OCI-LY7 (cell line): ENCODE measurements at regions of chr1 and their contacts with region 1.

Region 1: DNA sequence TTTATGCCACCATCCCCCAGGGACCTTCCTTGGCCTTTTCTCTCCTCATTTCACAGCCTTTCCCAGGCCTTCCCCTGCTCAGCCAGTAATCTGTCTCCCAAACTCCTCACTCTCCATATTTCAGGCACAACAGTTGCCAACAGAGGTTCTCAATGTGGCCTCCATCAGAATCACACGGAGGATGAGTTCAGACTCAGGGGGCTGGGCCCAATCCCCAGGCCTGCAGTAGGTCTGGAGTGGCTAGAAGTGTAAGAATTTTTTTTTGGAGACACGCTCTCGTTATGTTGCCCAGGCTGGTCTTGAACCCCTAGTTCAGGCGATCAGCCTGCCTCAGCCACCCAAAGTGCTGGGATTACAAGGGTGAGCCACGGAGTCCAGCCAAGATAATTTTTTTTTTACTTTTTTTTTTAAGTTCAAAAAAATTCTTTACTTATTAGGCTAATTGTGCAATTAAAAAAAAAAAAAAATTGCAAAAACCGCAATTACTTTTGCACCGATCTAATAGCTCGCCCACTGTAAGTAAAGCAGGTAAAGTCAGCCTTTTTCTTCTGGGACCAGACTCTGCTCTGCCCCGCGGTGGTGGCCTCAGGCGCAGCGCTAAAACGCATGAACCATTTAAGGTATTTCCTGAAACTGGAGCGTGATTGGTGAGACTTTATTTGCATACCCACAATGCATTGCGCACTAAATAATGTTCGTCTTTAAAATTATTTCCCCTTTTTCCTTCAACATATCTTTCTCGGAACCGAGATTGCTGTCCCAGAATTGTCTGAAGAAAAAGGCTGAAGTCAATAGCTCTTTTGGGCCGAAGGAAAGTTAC is 18.7 kb downstream of the KIAA2013 start:
- DNase-seq: peak; percentile 96
- H3K4me3 ChIP-seq: no peak overlapping the region
- H3K27ac ChIP-seq: peak overlapping the region; percentile 98
- H3K4me1 ChIP-seq: peaks cover 10% of the 10 kb centered on the region
- CTCF ChIP-seq: peak; percentile 97

Region 2: DNA sequence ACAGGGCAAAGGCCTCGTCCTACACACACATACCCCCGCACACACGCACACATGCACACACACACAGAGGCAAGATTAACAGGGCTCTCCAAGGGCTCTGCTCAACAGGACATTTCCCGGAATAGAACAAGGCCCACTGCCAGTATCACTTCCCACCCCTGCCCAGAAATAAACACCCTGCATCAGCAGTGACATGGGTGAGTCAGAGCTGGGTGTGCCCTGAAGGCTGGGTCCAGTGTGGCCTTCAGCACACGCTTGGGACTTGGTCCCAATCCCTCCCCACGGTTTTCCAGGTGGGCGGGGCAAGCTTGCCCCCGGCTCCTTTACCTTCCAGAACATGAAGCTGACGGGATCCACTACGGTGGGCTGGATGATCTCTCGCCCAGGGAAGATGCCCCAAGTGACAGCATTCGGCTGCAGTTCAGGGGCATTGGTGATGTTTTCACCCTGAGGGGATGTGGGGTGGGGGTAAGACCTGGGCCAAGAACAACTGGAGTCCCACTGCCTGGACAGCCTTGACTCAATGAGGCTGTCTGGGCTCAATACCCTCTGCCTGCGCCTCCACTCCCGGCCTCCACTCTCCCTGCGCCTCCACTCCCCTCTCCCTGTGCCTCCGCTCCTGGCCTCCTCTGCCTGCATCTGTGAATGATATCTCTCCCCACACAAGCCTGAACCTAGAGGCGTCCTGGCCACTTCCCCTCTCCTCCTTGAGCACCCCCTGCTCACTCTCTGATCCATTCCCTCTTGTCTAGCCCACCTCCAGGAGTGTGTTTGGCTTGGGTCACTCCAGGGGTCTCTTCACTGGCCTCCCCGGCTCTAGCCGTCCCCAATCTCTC is 116.4 kb before region 1 on chr1:
- CTCF ChIA-PET with region 1: no interaction called
- POLR2A ChIA-PET with region 1: no interaction called
- intact Hi-C with region 1: no loop called
- DNase-seq: no peak
- H3K4me3 ChIP-seq: no peak overlapping the region
- H3K27ac ChIP-seq: no peak overlapping the region
- H3K4me1 ChIP-seq: peaks cover 6% of the 10 kb centered on the region
- CTCF ChIP-seq: no peak

Region 3: DNA sequence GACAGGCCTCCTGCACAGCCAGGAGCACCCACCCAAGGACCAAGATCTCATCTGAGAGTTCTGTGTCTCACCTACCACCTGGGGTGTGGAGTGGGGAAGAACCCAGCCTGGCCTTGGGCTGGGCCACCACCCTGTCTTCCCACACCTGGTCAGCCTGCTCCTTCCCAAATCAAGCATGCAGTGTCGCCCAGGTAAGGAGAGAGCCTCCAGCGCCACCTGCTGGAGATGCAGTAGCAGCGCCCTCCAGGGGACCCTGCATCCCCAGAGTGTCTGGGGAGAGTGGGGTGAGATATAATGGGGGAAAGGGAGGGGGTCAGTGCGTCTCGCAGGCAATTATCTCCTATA is 13.6 kb before region 1 on chr1:
- CTCF ChIA-PET with region 1: no interaction called
- POLR2A ChIA-PET with region 1: interaction called, 10 read pairs
- intact Hi-C with region 1: no loop called
- DNase-seq: peak; percentile 76
- H3K4me3 ChIP-seq: no peak overlapping the region
- H3K27ac ChIP-seq: no peak overlapping the region
- H3K4me1 ChIP-seq: no peaks in the 10 kb centered on the region
- CTCF ChIP-seq: peak; percentile 96

Region 4: DNA sequence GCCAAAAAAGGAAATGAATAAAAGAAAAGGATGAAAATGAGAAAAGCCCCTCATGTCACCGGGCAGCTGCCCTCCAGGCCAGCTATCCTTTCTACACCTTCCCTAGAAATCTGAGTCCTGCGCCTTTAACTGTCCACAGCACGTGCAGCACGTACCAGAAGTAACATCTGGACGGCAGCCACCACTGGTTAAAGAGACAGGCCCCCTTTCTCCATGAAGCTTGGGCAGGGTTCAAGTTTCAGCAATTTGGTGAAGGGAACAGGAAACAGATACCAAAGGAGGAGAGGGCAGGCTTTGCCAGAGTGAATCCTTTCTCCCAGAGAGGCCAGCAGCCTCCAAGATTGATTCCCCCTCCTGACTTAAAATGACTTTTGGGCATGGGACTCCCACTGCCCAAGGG is 22.4 kb after region 1 on chr1:
- CTCF ChIA-PET with region 1: no interaction called
- POLR2A ChIA-PET with region 1: interaction called, 17 read pairs
- intact Hi-C with region 1: loop called (anchors 1 kb)
- DNase-seq: peak; percentile 76
- H3K4me3 ChIP-seq: no peak overlapping the region
- H3K27ac ChIP-seq: no peak overlapping the region
- H3K4me1 ChIP-seq: peaks cover 44% of the 10 kb centered on the region
- CTCF ChIP-seq: no peak

Region 5: GRCh38 chr1:11979851-11980675 is 72.6 kb after region 1 on chr1 and contains the start of gene MFN2:
- CTCF ChIA-PET with region 1: no interaction called
- POLR2A ChIA-PET with region 1: interaction called, 9 read pairs
- intact Hi-C with region 1: loop called (anchors 1 kb)
- DNase-seq: peak; percentile 93
- H3K4me3 ChIP-seq: peak within 1 kb of the TSS; percentile 93
- H3K27ac ChIP-seq: peak within 1 kb of the TSS; percentile 60
- H3K4me1 ChIP-seq: peaks cover 21% of the 10 kb centered on the region
- CTCF ChIP-seq: no peak
- total RNA-seq, gene MFN2: 28.3 and 32.2 TPM in 2 replicates

Region 6: DNA sequence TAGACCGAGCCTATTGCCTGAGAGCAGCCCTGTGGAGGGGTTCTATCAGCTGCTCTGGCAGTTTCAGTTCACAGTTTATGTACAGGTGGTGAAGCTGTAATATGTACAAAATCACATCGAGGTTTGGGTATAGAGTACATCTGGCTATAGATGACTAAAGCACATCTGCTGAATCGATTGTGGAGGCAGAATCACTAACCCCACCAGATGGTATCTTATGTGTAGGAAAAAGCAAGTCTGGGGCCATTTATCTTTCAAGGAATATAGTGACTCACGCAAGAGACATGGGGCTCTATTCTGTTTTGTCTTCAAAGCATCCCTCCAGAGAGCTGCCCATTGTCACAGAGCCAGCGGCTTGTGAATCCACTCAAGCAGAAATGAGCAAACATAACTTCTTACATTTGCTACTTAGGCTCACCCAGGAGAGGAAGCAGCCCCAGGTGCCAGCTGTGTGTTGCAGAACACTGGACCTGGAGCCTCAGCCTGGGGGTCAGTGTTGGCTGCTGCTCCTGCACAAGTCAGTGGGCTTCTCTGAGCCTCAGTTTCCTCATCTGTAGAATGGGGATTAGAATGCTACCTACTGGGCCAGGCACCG is 133.1 kb after region 1 on chr1:
- CTCF ChIA-PET with region 1: no interaction called
- POLR2A ChIA-PET with region 1: interaction called, 4 read pairs
- intact Hi-C with region 1: loop called (anchors 5 kb)
- DNase-seq: peak; percentile 96
- H3K4me3 ChIP-seq: peak overlapping the region; percentile 44
- H3K27ac ChIP-seq: peak overlapping the region; percentile 86
- H3K4me1 ChIP-seq: peaks cover 59% of the 10 kb centered on the region
- CTCF ChIP-seq: no peak

Region 7: DNA sequence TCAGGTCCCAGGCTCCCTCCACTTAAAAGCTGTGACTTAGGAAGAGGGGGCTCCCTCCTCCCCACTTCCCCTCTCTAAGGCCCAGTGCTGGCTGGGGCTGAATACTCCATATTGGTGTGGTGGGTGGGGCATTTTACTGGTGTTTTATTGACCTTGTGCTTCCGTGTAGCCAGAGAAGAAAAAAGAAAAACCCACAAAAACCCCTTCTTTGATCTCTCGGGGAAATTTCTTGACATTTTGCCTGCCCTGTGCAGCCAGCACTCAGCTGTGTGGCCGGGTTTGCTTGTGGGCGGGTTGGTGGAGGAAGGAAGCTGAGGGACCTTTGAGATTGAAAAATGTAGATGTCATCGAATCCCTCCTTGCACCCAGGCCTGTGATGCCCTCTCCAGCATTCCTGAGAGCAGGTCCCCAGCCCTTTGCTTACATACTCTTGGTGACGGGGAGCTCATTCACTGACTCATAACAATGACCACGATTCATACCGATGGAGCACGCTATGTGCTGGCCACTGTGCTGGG is 180.4 kb after region 1 on chr1:
- CTCF ChIA-PET with region 1: no interaction called
- POLR2A ChIA-PET with region 1: no interaction called
- intact Hi-C with region 1: no loop called
- DNase-seq: no peak
- H3K4me3 ChIP-seq: no peak overlapping the region
- H3K27ac ChIP-seq: no peak overlapping the region
- H3K4me1 ChIP-seq: no peaks in the 10 kb centered on the region
- CTCF ChIP-seq: no peak